Activated naive CD4-positive, alpha-beta T cell treated with anti-CD3 and anti-CD28 coated beads for 36 hours (primary cell): ENCODE measurements at regions of chr7 and their contacts with region 1.

Region 1: DNA sequence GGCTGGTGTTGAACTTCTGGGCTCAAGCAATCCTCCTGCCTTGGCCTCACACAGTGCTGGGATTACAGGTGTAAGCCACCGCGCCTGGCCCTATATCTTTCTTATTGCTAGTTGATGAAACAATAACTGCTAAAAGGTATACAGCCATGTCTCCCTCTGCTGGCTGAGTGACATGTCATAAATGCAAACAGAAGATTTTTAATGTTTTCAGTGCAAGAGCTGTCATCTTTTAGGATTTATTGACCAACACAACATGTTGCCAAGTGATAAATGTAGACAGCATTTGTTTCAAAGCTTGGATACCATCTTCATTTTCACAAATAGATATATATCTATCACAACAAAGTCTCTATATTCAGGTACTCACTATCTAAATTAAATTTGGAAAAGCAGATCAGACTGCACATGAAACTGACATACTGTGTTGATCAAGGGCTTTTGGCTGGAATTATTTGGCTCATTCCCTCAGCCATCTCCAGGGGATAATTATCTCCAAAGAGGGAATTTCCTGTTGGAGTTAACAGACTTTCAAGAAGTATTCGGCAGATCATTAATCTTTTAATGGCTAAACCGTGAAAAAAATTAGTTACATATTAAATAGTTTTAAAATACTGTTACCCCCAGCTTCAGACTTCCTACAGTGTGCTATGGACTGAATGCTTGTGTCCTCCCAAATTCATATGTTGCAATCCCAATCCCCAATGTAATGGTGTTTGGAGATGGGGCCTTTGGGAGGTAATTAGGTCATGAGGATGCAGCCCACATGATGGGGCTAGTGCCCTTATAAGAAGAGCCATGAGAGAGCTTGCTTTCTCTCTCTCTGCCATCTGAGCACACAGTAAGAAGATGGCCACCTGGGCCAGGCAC is 41.3 kb upstream of the SRPK2 start:
- DNase-seq: peak; percentile 80
- H3K4me3 Mint-ChIP-seq: no peak overlapping the region
- H3K27ac Mint-ChIP-seq: no peak overlapping the region
- H3K4me1 Mint-ChIP-seq: peaks cover 15% of the 10 kb centered on the region
- H3K27me3 Mint-ChIP-seq: no peaks in the 10 kb centered on the region

Region 2: DNA sequence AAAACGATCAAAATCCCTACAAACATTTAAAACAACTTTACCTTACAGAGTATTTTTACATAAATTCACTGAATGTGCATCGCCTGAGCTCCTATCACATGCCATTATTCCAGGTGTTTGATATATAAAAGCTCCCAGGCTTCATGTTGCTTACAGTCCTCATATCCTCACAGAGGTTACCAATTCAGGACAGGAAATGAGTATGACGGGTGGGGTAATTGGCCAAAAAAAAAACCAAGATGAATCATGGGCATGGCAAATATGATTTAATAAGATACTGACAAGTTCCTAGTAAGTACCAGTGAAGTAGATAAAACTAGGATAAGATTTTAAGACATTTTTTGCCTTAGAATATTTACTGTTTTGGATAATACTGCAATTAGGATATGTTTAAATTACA is 280.2 kb before region 1 on chr7:
- CTCF ChIA-PET with region 1: interaction called, 10 read pairs
- intact Hi-C with region 1: loop called (anchors 1 kb)
- DNase-seq: no peak
- H3K4me3 Mint-ChIP-seq: no peak overlapping the region
- H3K27ac Mint-ChIP-seq: no peak overlapping the region
- H3K4me1 Mint-ChIP-seq: peaks cover 4% of the 10 kb centered on the region
- H3K27me3 Mint-ChIP-seq: no peaks in the 10 kb centered on the region

Region 3: DNA sequence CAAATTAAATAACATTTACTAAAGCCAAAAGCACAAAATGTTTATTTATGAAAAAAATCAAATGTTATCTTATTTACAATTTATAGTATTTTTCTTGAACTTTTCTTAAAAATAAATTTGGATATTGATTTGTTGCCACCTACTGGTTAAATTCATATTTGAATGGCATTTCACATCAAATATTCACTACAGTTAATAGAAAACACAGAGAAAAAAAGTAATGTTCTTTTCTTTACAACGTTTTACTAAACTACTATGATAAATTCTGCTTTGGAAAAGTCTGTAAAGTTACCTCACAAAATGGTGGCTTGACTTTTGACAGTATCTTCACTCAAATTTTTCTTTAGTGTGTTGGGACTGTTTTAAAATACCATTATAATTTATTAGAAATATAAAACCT is 94.0 kb before region 1 on chr7:
- CTCF ChIA-PET with region 1: no interaction called
- intact Hi-C with region 1: loop called (anchors 2 kb)
- DNase-seq: no peak
- H3K4me3 Mint-ChIP-seq: no peak overlapping the region
- H3K27ac Mint-ChIP-seq: no peak overlapping the region
- H3K4me1 Mint-ChIP-seq: peaks cover 27% of the 10 kb centered on the region
- H3K27me3 Mint-ChIP-seq: no peaks in the 10 kb centered on the region

Region 4: GRCh38 chr7:105399043-105399725 is 30.8 kb before region 1 on chr7:
- CTCF ChIA-PET with region 1: interaction called, 5 read pairs
- intact Hi-C with region 1: loop called (anchors 1 kb)
- DNase-seq: no peak
- H3K4me3 Mint-ChIP-seq: no peak overlapping the region
- H3K27ac Mint-ChIP-seq: no peak overlapping the region
- H3K4me1 Mint-ChIP-seq: peaks cover 5% of the 10 kb centered on the region
- H3K27me3 Mint-ChIP-seq: no peaks in the 10 kb centered on the region

Region 5: DNA sequence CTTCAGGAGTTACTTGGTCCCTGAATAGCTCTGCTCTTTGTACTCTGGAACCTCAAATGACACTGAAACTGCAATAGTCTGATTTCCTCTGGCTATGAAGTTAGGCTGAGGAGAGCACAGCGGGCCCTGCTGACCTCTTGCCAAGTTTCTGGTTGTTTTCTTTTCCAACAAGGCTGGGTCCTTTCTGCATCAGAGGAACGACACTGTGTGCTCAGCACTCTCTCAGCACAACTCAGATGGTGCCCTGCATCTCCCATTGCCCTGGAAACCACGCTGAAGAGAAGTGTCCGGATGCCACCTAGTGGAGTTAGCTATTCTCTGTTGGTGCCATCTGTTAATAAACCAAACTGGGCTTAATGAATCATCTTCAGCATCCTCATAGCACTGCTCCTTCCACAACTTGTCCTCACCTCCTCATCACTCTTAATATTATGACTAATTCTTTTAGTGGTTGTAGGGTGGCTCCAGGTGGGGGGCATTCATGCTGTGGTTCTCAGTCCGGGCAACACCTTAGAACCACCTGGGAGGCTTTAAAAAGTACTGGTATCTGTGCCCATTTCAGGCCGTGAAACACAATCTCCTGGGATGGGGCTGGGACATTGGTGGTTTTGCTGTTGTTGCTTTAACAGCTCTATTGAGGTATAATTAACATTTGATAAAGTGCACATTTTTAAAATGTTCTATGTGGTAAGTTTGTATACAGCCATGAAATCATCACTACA is 159.5 kb after region 1 on chr7:
- CTCF ChIA-PET with region 1: no interaction called
- intact Hi-C with region 1: loop called (anchors 1 kb)
- DNase-seq: peak; percentile 82
- H3K4me3 Mint-ChIP-seq: no peak overlapping the region
- H3K27ac Mint-ChIP-seq: no peak overlapping the region
- H3K4me1 Mint-ChIP-seq: peaks cover 4% of the 10 kb centered on the region
- H3K27me3 Mint-ChIP-seq: no peaks in the 10 kb centered on the region